Activated CD4-positive, alpha-beta T cell treated with anti-CD3 and anti-CD28 coated beads for 36 hours (primary cell): ENCODE measurements at regions of chr14 and their contacts with region 1.

Region 1: DNA sequence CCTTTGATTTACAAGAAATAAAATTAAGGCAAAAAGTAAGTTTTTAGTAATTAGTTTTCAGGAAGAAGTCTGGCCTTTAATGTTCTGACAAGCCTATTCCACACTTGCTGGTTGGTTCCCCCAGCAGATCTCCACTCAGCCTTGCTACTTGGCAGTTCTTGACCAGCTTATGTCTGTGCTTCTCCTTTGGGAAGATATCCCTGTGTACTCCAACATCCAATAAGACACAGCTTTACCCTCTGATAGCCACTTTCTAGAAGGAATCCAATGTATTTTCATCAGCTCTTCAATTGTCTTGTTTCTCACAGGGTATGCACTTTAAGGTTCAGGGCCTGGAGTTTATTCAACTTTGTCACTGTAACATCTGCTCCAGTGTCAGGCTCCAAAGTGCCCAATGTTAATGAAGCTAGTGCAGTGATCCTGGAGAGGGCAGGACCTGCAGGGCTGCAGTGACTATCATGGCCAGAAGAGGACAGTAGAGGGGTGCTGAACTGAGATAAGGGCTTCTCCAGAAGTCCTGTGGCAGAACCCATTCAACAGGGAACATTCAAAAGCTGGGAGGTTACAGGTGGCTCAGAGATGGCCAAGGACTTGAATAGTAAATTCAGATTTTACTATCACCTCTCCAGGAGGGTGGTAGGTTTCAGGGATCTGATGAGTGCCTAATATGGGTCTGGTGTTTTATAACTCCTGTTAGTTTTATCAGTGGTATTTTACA is 22.9 kb downstream of the JKAMP start:
- DNase-seq: peak; percentile 76
- ATAC-seq: peak; percentile 95
- H3K4me3 Mint-ChIP-seq: no peak overlapping the region
- H3K27ac Mint-ChIP-seq: no peak overlapping the region
- H3K4me1 Mint-ChIP-seq: peaks cover 5% of the 10 kb centered on the region
- H3K27me3 Mint-ChIP-seq: peaks cover 3% of the 10 kb centered on the region

Region 2: GRCh38 chr14:59474172-59474571 is 33.0 kb before region 1 on chr14:
- CTCF ChIA-PET with region 1: interaction called, 10 read pairs
- POLR2A ChIA-PET with region 1: no interaction called
- intact Hi-C with region 1: no loop called
- DNase-seq: no peak
- ATAC-seq: no peak
- H3K4me3 Mint-ChIP-seq: no peak overlapping the region
- H3K27ac Mint-ChIP-seq: no peak overlapping the region
- H3K4me1 Mint-ChIP-seq: peaks cover 4% of the 10 kb centered on the region
- H3K27me3 Mint-ChIP-seq: no peaks in the 10 kb centered on the region

Region 3: GRCh38 chr14:59529189-59529588 is 22.0 kb after region 1 on chr14:
- CTCF ChIA-PET with region 1: interaction called, 3 read pairs
- POLR2A ChIA-PET with region 1: no interaction called
- intact Hi-C with region 1: loop called in 1 of 2 experiments (anchors 2 kb)
- DNase-seq: no peak
- ATAC-seq: no peak
- H3K4me3 Mint-ChIP-seq: no peak overlapping the region
- H3K27ac Mint-ChIP-seq: no peak overlapping the region
- H3K4me1 Mint-ChIP-seq: no peaks in the 10 kb centered on the region
- H3K27me3 Mint-ChIP-seq: peaks cover 11% of the 10 kb centered on the region

Region 4: DNA sequence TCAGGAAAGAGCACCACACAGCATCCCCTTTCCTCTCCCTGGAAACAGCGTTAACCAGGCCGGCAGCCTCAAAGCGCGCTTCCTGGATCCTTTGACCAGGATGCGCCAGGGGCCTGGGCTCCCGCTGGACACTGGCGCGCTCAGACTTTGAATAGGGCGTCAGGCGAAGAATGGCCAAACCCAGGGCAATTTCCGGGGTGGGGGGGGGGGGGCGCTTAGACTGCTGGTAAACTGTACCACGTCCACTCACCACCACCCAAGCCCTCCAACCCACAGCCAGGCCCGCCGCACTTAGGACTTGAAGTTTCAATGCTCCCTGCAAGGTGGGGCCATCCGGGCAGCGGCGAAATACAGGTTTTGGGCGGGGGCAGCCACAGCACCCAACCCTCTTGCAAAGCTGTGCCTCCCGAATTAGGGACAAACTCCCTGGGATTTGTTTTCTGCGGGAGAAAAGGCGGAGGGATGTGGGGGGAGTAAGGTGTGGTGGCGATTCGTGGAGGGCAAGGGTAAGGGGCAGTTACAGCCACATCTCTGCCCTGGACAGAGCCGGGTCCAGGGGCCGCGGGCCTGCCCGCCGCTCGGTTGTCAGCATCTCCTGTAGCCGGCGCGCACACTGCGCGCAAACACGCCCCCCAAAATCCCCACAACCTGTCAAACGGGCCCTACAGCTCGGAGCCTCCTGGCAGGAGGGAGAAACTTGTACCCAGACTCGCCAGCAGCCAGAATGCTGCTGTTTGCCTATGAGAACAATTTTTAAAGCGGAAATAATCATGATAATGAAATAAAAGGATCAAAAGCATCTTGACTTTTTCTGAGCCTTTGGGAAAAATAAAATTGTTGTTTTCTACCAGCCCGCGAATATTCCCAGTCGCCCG is 362.4 kb after region 1 on chr14:
- CTCF ChIA-PET with region 1: interaction called, 5 read pairs
- POLR2A ChIA-PET with region 1: no interaction called
- intact Hi-C with region 1: loop called in 1 of 2 experiments (anchors 5 kb)
- DNase-seq: peak; percentile 11
- ATAC-seq: no peak
- H3K4me3 Mint-ChIP-seq: no peak overlapping the region
- H3K27ac Mint-ChIP-seq: no peak overlapping the region
- H3K4me1 Mint-ChIP-seq: peaks cover 6% of the 10 kb centered on the region
- H3K27me3 Mint-ChIP-seq: peaks cover 39% of the 10 kb centered on the region